MCF 10A (cell line): ENCODE measurements at regions of chr10 and their contacts with region 1.

Region 1: GRCh38 chr10:32958085-32959005 is at the start of gene ITGB1:
- DNase-seq: peak; percentile 97
- H3K4me3 Mint-ChIP-seq: peak within 1 kb of the TSS; percentile 91
- H3K27ac Mint-ChIP-seq: peak within 1 kb of the TSS; percentile 100
- H3K4me1 Mint-ChIP-seq: peaks cover 30% of the 10 kb centered on the region
- H3K27me3 Mint-ChIP-seq: no peaks in the 10 kb centered on the region
- CTCF ChIP-seq: no peak
- total RNA-seq, gene ITGB1: 680 and 703 TPM in 2 replicates

Region 2: DNA sequence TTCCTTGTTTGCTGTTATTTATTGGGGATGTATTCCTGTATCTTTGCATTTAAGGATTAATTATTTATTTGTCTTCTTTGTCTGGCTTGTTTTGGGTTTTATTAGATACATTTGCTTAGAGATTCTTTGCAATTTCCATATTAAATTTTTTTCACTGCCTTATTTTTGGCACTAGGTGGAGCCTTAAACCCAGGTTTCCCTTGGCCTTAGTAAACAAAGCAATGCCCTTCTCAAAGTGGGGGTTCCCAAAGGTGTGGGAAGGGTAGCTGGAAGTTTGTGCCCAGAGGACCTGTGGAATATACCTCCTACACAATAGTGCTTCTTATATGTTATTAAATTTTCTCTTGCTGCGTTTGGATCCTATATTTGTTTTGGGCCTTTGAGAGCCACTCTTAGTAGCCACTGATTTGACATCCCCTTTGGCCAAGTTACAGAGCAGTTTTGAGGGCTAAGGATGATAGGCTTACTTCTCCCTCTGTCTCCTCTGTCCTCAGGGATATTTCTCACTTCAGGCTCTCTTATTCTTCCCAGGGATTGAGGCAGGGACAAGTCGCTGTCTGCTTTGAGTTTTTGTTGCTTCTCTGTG is 162.7 kb before region 1 on chr10:
- CTCF ChIA-PET with region 1: no interaction called
- POLR2A ChIA-PET with region 1: no interaction called
- intact Hi-C with region 1: loop called (anchors 5 kb)
- DNase-seq: peak; percentile 43
- H3K4me3 Mint-ChIP-seq: no peak overlapping the region
- H3K27ac Mint-ChIP-seq: no peak overlapping the region
- H3K4me1 Mint-ChIP-seq: no peaks in the 10 kb centered on the region
- H3K27me3 Mint-ChIP-seq: no peaks in the 10 kb centered on the region
- CTCF ChIP-seq: peak; percentile 67

Region 3: DNA sequence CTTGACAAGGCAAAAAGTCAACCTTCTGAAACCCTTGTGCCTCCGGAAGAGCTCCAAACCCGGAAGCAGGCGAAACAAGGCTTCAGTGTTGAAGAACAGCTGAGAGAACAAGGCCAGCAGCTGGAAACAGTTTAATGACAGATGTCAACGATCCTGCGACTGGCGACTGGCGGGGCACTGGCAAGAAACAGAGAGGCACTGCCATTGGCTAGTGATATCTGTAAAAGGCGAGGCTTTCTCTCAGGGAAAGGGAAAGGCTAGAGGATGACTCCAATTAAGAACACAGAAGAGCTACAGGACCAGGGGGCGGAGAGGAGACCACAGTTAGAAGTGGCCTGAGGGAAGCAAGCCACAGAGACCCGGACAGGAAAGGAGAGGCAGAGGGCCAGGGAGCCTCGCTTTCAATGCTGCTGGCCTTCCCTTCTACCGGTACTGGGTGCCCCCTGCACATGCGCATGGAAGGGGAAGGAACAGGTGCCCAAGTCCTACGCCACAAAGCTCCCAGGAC is 19.7 kb before region 1 on chr10:
- CTCF ChIA-PET with region 1: interaction called, 3 read pairs
- POLR2A ChIA-PET with region 1: interaction called, 333 read pairs
- intact Hi-C with region 1: no loop called
- DNase-seq: no peak
- H3K4me3 Mint-ChIP-seq: peak overlapping the region; percentile 63
- H3K27ac Mint-ChIP-seq: peak overlapping the region; percentile 97
- H3K4me1 Mint-ChIP-seq: peaks cover 59% of the 10 kb centered on the region
- H3K27me3 Mint-ChIP-seq: no peaks in the 10 kb centered on the region
- CTCF ChIP-seq: no peak

Region 4: DNA sequence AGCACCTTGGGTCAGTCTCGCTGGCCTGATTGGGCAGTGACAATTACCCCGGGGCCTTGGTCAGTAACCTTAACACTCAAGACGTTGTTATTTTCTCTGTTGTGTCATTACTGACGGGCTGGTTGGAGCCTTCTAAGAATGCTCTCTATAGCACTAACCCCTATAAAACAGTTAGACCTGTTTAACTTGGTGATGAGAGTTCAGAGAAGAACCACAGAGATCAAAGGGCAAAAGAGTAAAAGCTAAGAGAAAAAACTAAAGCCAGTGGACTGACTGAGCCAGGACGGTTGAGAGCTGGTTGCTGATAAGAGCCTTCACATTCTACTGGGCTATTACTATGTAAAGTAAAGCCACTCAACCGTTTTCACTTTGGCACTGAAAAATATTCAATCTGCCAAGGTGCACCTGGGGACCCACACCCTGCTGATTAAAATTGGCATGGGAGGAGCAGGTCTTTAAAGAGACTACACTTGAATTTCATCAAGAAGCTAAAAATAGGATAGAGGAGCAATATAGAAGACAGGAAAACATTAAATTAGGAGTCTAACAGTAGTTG is 13.3 kb after region 1 on chr10:
- CTCF ChIA-PET with region 1: no interaction called
- POLR2A ChIA-PET with region 1: interaction called, 28 read pairs
- intact Hi-C with region 1: no loop called
- DNase-seq: no peak
- H3K4me3 Mint-ChIP-seq: peak overlapping the region; percentile 30
- H3K27ac Mint-ChIP-seq: peak overlapping the region; percentile 2
- H3K4me1 Mint-ChIP-seq: peaks cover 26% of the 10 kb centered on the region
- H3K27me3 Mint-ChIP-seq: no peaks in the 10 kb centered on the region
- CTCF ChIP-seq: no peak

Region 5: DNA sequence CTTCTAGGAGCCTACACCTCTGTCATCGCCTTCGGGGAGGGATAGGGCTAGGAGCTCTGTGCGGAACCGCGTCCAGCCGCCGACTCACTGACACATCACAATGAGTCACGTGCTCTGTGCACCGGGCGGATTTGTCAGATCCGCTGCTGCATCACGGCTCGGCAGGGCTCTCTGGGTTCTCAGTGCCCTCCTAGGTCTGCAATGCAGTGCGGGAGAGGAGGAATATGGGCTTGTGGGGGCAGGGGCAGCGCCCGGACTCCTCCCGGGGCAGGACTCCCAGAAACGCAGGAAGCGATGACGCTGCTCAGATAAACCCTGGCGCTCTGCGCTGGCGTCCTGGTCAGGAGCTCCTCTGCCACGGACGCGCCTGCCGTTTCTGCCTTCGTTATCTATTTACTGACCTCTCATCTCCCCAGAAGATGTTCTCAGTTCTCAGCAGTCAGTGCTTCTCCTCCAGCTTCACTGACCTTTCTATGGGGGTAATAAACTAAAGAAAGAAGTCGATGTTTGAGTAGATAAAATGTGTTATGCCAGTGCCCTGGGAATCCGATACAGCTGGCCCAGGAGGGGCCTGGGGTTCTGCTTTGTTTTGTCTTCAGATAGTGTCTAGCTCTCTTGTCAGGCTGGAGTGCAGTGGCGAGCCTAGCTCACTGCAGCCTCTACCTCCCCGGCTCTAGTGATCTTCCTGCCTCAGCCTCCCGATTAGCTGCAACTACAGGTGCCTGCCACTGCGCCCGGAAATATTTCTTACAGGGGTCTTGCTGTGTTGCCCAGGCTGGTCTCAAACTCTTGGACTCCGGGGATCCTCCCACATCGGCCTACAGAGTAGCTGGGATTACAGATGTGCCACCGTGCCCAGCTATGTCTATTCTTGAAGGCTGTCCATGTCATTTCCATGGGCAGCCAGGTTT is 22.5 kb after region 1 on chr10:
- CTCF ChIA-PET with region 1: interaction called, 4 read pairs
- POLR2A ChIA-PET with region 1: interaction called, 261 read pairs
- intact Hi-C with region 1: loop called (anchors 1 kb)
- DNase-seq: peak; percentile 99
- H3K4me3 Mint-ChIP-seq: peak overlapping the region; percentile 92
- H3K27ac Mint-ChIP-seq: peak overlapping the region; percentile 99
- H3K4me1 Mint-ChIP-seq: peaks cover 34% of the 10 kb centered on the region
- H3K27me3 Mint-ChIP-seq: no peaks in the 10 kb centered on the region
- CTCF ChIP-seq: no peak

Region 6: DNA sequence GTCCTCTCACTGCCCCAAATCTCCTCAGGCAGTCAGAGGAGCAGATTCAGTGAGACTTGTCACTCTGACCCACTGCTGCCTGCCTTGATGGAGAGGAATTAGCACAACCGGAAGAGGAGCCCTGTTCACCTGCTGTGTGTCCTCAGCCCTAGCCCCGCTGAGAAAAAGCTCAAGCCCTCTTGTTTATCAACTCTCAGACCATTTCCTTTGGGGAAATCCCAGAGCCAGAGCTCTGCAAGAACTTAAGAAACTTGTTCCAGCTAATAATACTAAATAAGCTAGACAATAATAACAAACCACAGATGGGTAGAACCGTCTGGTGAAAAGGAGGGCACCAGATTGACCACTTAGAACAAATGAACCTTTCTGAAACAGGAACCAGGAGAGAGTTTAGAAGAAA is 37.4 kb after region 1 on chr10:
- CTCF ChIA-PET with region 1: no interaction called
- POLR2A ChIA-PET with region 1: interaction called, 27 read pairs
- intact Hi-C with region 1: no loop called
- DNase-seq: no peak
- H3K4me3 Mint-ChIP-seq: no peak overlapping the region
- H3K27ac Mint-ChIP-seq: no peak overlapping the region
- H3K4me1 Mint-ChIP-seq: peaks cover 28% of the 10 kb centered on the region
- H3K27me3 Mint-ChIP-seq: no peaks in the 10 kb centered on the region
- CTCF ChIP-seq: no peak

Region 7: GRCh38 chr10:33155720-33156638 is 197.6 kb after region 1 on chr10:
- CTCF ChIA-PET with region 1: no interaction called
- POLR2A ChIA-PET with region 1: no interaction called
- intact Hi-C with region 1: loop called (anchors 5 kb)
- DNase-seq: peak; percentile 80
- H3K4me3 Mint-ChIP-seq: no peak overlapping the region
- H3K27ac Mint-ChIP-seq: no peak overlapping the region
- H3K4me1 Mint-ChIP-seq: peaks cover 20% of the 10 kb centered on the region
- H3K27me3 Mint-ChIP-seq: no peaks in the 10 kb centered on the region
- CTCF ChIP-seq: peak; percentile 61